ENCODE measurements at regions of chr3 and their contacts with region 1.

Region 1: DNA sequence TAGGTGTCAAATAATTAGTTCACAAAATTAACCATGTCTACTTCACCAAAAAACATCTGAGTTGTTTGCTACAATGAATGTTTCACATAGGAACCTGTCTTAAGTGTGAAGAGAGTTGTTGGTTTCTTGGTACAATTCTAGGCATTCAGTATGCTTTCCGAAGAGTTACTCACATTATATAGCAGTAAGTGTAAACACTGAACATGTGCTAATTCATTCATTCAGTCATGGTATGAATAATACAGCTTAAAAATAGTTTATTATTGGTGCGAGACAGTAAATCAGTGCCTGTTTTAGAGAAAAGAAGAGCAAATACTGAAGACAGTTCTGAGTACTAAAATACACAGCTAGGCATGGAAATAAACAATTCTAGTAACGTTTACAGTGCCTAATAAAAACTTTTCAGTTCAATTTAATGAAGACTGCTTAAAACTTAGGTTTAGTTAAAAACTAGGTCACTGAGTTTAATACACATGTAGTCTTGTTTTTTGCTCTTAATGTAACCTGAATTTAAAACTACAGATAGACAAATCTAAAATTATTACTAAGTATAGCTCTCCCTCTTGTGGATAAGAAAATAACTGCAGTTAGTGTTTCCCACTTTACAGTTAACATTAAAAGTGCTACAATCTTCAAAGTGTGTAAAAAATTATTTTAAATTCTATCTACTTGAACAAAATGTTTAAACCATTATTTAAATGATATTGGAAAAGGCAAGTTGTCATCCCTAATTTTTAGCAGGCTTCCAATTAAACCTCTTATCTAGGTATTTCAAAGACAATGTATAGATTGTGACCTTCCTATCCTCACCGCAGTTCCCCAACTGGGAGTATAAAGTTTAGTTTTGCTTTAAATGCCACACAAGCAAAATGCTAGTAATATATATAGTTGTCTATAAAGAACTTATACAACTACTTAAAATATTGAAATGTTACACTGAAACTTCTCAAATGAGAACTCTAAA is 20.1 kb upstream of the ZCWPW2 start:
- DNase-seq: no peak
- CTCF ChIP-seq: peak; percentile 51

Region 2: GRCh38 chr3:27721717-27722542 is 606.5 kb before region 1 on chr3 and contains the start of gene EOMES:
- CTCF ChIA-PET with region 1: interaction called, 25 read pairs
- POLR2A ChIA-PET with region 1: no interaction called
- DNase-seq: peak; percentile 64
- CTCF ChIP-seq: peak; percentile 32

Region 3: GRCh38 chr3:28317438-28318022 is 10.9 kb before region 1 on chr3:
- CTCF ChIA-PET with region 1: interaction called, 35 read pairs
- POLR2A ChIA-PET with region 1: no interaction called
- DNase-seq: peak; percentile 22
- CTCF ChIP-seq: peak; percentile 42

Region 4: GRCh38 chr3:28348629-28349483 is 20.4 kb after region 1 on chr3 and contains the starts of genes AZI2 and ZCWPW2:
- CTCF ChIA-PET with region 1: interaction called, 7 read pairs
- POLR2A ChIA-PET with region 1: interaction called, 12 read pairs
- DNase-seq: peak; percentile 87
- CTCF ChIP-seq: peak; percentile 16

Measured in GM10248 (cell line).